ENCODE measurements at regions of chr22 and their contacts with region 1.

Region 1: GRCh38 chr22:20656902-20657836 is 116.7 kb upstream of the SERPIND1 start:
- DNase-seq: no peak

Region 2: GRCh38 chr22:19619144-19620009 is 1037.8 kb before region 1 on chr22:
- intact Hi-C with region 1: loop called in 1 of 2 experiments (anchors 10 kb)
- DNase-seq: peak; percentile 72

Region 3: GRCh38 chr22:20750461-20751184 is 93.5 kb after region 1 on chr22:
- intact Hi-C with region 1: no loop called
- DNase-seq: peak; percentile 87

Region 4: DNA sequence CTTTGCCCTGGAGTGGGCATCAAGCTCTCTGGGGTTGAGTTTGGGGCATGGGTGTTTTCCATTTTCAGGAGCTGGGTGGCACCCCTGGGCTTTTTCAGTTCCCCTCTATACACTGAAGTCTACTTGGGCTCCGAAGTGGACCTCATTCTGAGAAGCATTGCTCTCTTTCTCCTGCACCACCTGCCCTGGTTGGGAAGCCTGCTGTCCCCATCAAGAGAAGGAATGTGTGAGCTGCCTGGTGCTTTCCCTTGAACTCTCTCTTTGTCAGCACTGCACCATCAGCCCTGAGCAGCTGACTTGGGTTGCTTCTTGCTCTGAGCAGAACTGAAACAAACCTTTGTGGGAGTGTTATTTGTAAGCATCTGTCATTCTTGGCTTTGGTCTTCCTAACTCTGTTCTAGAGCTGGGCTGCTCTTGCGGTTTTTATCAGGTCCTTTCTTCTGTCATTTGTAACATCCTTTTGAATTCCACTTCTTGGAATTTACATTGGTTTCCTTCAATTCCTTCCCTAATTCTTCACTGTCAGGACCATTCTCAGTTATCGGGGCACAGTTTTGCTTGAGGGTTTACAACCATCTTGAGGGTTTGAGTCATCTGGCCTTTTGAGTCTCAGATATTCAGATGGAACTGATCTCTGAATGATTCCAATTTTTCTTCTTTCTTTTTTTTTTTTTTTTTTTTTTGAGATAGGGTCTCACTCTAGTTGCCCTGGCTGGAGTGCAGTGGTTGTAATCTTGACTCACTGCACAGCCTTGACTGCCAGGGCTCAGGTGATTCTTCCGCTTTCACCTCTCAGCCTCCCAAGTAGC is 930.8 kb after region 1 on chr22:
- intact Hi-C with region 1: no loop called
- DNase-seq: no peak